ENCODE measurements at regions of chr12 and their contacts with region 1.

Region 1: DNA sequence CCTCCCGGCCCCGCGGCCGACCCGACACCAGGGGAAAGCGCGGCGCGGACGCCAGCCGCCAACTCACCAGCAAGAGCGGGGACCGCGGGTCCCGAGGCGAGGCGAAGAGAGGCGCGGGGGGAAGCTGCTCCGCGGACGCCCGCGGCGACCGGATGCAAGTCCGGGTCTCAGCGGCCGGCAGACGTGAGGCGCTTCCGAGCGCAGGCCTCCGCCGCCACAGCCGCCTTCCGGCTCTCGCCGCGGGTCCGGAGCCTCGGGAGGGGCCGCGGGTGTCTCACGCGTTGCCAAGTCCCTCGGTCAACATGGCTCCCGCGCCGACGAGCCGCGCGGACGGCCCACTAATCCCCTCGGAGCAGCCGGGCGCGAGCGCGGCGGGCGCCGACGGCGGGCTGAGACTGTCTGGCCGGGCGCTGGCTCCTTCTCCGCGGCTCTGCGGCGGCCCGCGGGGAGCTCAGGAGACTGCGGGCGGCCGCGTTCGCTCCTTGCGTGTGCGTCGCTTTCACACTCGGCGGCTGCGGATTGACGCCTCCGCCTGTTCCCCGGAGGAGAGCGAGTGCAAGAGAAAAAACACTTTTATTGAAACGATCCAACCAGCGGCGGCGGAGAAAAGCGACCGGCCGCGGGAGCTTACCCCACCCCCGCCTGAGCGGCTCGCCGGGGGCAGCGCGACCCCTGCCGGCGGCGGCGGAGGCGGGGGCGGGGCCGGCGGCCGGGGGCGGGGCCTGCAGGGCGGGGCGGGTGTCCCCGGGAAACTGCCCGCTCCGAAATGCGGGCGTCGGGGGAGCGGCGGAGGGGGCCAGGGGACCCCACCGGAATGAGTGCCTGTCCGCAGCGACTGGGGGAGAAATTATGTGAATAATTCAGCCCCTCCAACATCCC is at the start of gene CDK17:
- DNase-seq: peak; percentile 90 to 92 (median 90)
- H3K4me3 ChIP-seq: peak within 1 kb of the TSS; percentile 86 to 87
- H3K4me3 Mint-ChIP-seq: peak within 1 kb of the TSS; percentile 96 to 99 (median 98)
- H3K27ac ChIP-seq: peak within 1 kb of the TSS; percentile 96
- H3K27ac Mint-ChIP-seq: peak within 1 kb of the TSS; percentile 96 to 99 (median 98)
- H3K4me1 ChIP-seq: peaks cover 45% of the 10 kb centered on the region
- H3K4me1 Mint-ChIP-seq: peaks cover 30 to 55% (median 40%) of the 10 kb centered on the region in 4 donors
- H3K27me3 ChIP-seq: no peaks in the 10 kb centered on the region
- H3K27me3 Mint-ChIP-seq: no peaks in the 10 kb centered on the region
- total RNA-seq, gene CDK17: 66.9 to 67.4 TPM

Region 2: DNA sequence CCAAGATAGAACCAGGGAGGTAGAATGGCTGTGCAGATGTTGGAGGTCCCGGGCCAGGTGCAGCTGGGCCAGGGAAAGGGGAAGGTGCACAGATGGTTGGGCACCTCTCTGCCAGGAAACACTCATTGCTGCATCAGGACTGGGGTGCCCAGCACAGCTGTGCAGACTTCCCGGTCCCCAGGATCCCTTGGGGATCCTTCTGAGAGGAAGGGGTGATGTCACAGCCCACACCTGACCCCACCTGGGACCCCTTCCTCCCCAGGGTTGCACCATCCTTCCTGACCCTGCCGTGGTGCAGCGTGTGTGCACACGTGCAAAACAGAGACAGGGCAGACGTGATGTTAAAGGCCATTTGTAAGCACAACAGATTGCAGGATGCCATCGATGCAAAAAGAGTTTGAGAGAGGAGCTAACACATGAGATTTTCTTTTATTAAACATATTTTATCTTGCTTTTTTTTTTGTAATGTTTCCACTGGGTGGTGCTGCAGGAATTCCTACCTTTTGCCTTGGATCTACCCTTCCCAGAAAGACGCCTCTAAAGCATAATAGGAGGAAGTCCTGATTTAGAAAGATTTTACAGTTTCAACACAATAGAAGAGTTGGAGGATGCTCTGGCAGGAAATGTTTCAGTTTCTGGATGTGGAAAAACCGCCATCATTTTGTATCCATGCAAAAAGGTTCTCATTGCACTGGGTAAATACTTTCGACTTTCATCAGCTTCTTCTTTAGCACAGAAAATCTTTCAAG is 191.2 kb before region 1 on chr12:
- CTCF ChIA-PET with region 1: interaction called, 17 read pairs
- POLR2A ChIA-PET with region 1: interaction called, 28 read pairs
- intact Hi-C with region 1: no loop called
- DNase-seq: no peak
- H3K4me3 ChIP-seq: no peak overlapping the region
- H3K4me3 Mint-ChIP-seq: peak overlapping the region; percentile 57 to 96 (median 86)
- H3K27ac ChIP-seq: peak overlapping the region; percentile 62
- H3K27ac Mint-ChIP-seq: peak overlapping the region; percentile 92 to 100 (median 98)
- H3K4me1 ChIP-seq: peaks cover 100% of the 10 kb centered on the region
- H3K4me1 Mint-ChIP-seq: peaks cover 82 to 100% (median 92%) of the 10 kb centered on the region in 4 donors
- H3K27me3 ChIP-seq: no peaks in the 10 kb centered on the region
- H3K27me3 Mint-ChIP-seq: no peaks in the 10 kb centered on the region

Region 3: DNA sequence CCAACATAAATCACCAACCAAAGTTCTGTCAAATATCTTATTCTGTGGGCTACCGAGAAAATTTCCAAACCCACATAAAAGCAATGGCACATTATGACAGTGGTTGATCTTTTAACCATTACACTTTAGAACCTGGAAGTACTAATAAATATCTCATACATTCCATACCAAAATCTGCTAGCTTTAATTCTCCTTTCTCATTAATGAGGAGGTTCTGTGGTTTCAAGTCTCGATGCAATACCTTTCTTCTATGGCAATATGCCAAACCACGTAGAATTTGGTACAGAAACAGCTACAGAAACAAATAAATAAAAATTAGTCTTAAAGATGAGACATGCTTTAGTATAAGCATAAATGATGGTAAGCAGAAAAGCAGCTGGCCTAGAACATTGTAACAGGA is 105.3 kb before region 1 on chr12:
- CTCF ChIA-PET with region 1: interaction called, 12 read pairs
- POLR2A ChIA-PET with region 1: interaction called, 13 read pairs
- intact Hi-C with region 1: loop called (anchors 5 kb)
- DNase-seq: peak; percentile 27 to 56 (median 45)
- H3K4me3 ChIP-seq: no peak overlapping the region
- H3K4me3 Mint-ChIP-seq: peak overlapping the region in 5 of 8 donors; percentile 16 to 73 (median 27)
- H3K27ac ChIP-seq: no peak overlapping the region
- H3K27ac Mint-ChIP-seq: peak overlapping the region in 2 of 7 donors; percentile 25 to 77
- H3K4me1 ChIP-seq: peaks cover 15% of the 10 kb centered on the region
- H3K4me1 Mint-ChIP-seq: peaks cover 18 to 25% (median 19%) of the 10 kb centered on the region in 4 donors
- H3K27me3 ChIP-seq: no peaks in the 10 kb centered on the region
- H3K27me3 Mint-ChIP-seq: no peaks in the 10 kb centered on the region

Region 4: GRCh38 chr12:96361074-96361473 is 39.1 kb before region 1 on chr12:
- CTCF ChIA-PET with region 1: interaction called, 3 read pairs
- POLR2A ChIA-PET with region 1: interaction called, 8 read pairs
- intact Hi-C with region 1: loop called (anchors 5 kb)
- DNase-seq: no peak
- H3K4me3 ChIP-seq: no peak overlapping the region
- H3K4me3 Mint-ChIP-seq: peak overlapping the region in 2 of 8 donors; percentile 24 to 64
- H3K27ac ChIP-seq: no peak overlapping the region
- H3K27ac Mint-ChIP-seq: peak overlapping the region in 1 of 7 donors; percentile 32
- H3K4me1 ChIP-seq: peaks cover 74% of the 10 kb centered on the region
- H3K4me1 Mint-ChIP-seq: peaks cover 52 to 84% (median 63%) of the 10 kb centered on the region in 4 donors
- H3K27me3 ChIP-seq: no peaks in the 10 kb centered on the region
- H3K27me3 Mint-ChIP-seq: no peaks in the 10 kb centered on the region

Region 5: GRCh38 chr12:96434107-96434506 is 33.9 kb after region 1 on chr12:
- CTCF ChIA-PET with region 1: interaction called, 5 read pairs
- POLR2A ChIA-PET with region 1: interaction called, 39 read pairs
- intact Hi-C with region 1: loop called (anchors 1 kb)
- DNase-seq: peak; percentile 87 to 92 (median 89)
- H3K4me3 ChIP-seq: no peak overlapping the region
- H3K4me3 Mint-ChIP-seq: peak overlapping the region; percentile 4 to 74 (median 56)
- H3K27ac ChIP-seq: peak overlapping the region; percentile 56
- H3K27ac Mint-ChIP-seq: peak overlapping the region; percentile 52 to 97 (median 88)
- H3K4me1 ChIP-seq: peaks cover 19% of the 10 kb centered on the region
- H3K4me1 Mint-ChIP-seq: peaks cover 11 to 32% (median 23%) of the 10 kb centered on the region in 4 donors
- H3K27me3 ChIP-seq: no peaks in the 10 kb centered on the region
- H3K27me3 Mint-ChIP-seq: no peaks in the 10 kb centered on the region

Region 6: DNA sequence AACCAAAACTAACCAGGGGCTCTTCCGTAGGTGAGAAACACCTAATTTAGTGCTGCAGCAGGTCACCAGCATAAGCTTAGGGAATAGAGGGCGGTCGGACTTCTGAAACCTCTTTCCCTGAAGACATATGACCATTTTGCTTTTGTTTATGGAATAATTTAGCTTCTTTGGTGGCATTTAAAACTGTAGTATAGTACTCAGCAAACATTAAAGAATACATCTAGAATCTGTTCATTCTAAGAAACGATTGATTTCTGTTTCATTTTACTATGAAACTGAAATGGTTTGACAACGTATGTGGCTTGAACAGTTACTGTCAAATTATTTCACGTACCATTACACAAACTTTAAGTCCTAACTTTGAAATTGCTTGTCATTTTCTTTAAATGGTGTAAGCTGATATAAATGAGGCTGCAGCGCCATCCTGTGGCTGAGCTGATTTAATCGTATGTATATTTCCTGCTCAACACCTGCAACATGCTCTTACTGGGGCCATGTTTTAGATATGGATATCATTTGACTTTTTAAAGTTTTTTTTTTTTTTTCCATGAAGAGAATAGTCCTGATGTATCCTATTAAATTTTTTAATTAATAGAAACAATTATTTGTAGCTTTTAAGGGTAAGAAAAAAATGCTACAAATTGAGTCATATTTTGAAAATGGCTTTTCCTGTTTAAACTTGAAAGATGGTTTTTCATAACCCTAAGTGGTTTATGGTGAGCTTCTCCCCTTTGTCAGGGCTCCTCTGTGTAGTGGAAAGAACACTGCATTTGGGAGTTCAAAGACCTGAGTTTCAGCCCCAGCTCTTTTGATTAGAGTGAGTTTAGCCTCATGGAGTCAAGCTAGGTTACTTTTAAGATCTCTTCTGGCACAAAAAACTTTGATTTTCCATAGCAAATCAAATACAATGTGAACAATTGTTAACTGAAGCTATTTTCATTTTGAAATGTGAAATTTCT is 116.6 kb after region 1 on chr12:
- CTCF ChIA-PET with region 1: interaction called, 74 read pairs
- POLR2A ChIA-PET with region 1: interaction called, 37 read pairs
- intact Hi-C with region 1: loop called (anchors 1 kb)
- DNase-seq: peak; percentile 80 to 84 (median 81)
- H3K4me3 ChIP-seq: peak overlapping the region in 1 of 2 donors; percentile 38
- H3K4me3 Mint-ChIP-seq: peak overlapping the region in 7 of 8 donors; percentile 12 to 80 (median 43)
- H3K27ac ChIP-seq: no peak overlapping the region
- H3K27ac Mint-ChIP-seq: peak overlapping the region; percentile 22 to 87 (median 67)
- H3K4me1 ChIP-seq: peaks cover 7% of the 10 kb centered on the region
- H3K4me1 Mint-ChIP-seq: peaks cover 5 to 11% (median 6%) of the 10 kb centered on the region in 4 donors
- H3K27me3 ChIP-seq: no peaks in the 10 kb centered on the region
- H3K27me3 Mint-ChIP-seq: no peaks in the 10 kb centered on the region

Region 7: GRCh38 chr12:96578526-96579125 is 178.5 kb after region 1 on chr12:
- CTCF ChIA-PET with region 1: no interaction called
- POLR2A ChIA-PET with region 1: no interaction called
- intact Hi-C with region 1: no loop called
- DNase-seq: peak; percentile 31 to 64 (median 55)
- H3K4me3 ChIP-seq: no peak overlapping the region
- H3K4me3 Mint-ChIP-seq: no peak overlapping the region
- H3K27ac ChIP-seq: no peak overlapping the region
- H3K27ac Mint-ChIP-seq: peak overlapping the region in 1 of 7 donors; percentile 43
- H3K4me1 ChIP-seq: no peaks in the 10 kb centered on the region
- H3K4me1 Mint-ChIP-seq: peaks cover 0 to 4% (median 0%) of the 10 kb centered on the region in 4 donors
- H3K27me3 ChIP-seq: no peaks in the 10 kb centered on the region
- H3K27me3 Mint-ChIP-seq: peaks cover 0 to 2% of the 10 kb centered on the region in 2 donors